Sciatic nerve (tissue), 2 donors: ENCODE measurements at regions of chr13 and their contacts with region 1.

Region 1: DNA sequence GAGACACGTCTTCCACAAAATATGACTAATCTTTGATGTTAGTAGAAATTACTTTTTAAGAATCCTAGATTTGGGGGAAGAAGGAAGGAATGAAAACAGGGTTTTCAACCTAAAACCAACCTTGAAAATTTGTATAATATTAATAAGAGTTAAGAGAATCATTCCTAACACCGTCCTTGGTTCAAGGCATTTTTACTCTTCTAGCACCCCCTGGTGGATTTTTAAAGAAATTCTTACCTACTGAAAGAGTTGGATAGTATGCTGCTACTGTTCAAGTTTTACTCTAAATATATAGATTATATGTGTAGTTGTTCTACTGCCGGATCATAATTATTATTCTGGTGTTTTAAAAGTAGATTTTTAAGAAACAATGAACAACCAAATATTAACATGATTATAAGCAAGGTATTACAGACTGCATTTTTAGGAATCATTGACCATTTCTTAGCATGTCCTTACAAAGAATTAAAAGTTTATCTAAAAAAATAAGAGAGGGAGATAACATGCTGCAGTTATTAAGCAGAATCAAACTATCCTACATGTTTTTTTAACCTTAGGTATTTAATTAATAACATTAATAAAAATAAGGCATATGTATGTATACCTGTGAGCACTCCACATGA is 7.4 kb upstream of the SLITRK6 start:
- DNase-seq: no peak
- ATAC-seq: peak; percentile 50

Region 2: DNA sequence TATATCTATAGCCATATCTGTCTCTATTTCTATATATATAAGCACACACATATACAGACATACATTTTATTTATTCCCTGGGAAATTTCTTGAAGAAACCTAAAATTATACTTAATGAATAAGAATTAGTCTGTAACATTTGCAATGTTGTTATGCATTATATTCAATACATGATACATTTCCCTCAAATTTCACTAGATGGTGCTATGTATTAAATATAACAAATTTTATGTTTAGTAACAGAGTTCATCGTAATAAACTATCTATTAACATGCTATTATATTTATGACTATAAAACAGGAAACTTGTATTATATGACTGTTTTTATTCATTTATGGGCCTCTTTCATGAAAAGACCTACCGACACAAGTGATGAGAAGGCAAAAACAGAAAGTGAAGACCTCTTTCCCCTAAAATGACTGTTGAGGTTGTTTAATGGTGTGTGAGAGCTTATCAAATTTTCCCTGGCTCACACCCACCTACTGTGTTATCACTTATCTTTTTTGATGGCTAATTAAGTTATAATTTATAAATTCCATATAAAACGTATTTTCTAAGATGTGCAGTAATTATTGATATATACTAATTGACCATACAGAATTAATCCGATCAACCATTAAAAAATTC is 889.3 kb before region 1 on chr13:
- intact Hi-C with region 1: loop called (anchors 10 kb)
- DNase-seq: no peak
- ATAC-seq: no peak